Activated CD8-positive, alpha-beta T cell treated with anti-CD3 and anti-CD28 coated beads for 36 hours (primary cell): ENCODE measurements at regions of chr12 and their contacts with region 1.

Region 1: GRCh38 chr12:452667-453210 is 7.0 kb upstream of the B4GALNT3 start:
- DNase-seq: peak; percentile 91
- ATAC-seq: peak; percentile 40
- H3K4me3 Mint-ChIP-seq: no peak overlapping the region
- H3K27ac Mint-ChIP-seq: no peak overlapping the region
- H3K4me1 Mint-ChIP-seq: peaks cover 3% of the 10 kb centered on the region
- H3K27me3 Mint-ChIP-seq: peaks cover 9% of the 10 kb centered on the region
- CTCF ChIP-seq: no peak

Region 2: DNA sequence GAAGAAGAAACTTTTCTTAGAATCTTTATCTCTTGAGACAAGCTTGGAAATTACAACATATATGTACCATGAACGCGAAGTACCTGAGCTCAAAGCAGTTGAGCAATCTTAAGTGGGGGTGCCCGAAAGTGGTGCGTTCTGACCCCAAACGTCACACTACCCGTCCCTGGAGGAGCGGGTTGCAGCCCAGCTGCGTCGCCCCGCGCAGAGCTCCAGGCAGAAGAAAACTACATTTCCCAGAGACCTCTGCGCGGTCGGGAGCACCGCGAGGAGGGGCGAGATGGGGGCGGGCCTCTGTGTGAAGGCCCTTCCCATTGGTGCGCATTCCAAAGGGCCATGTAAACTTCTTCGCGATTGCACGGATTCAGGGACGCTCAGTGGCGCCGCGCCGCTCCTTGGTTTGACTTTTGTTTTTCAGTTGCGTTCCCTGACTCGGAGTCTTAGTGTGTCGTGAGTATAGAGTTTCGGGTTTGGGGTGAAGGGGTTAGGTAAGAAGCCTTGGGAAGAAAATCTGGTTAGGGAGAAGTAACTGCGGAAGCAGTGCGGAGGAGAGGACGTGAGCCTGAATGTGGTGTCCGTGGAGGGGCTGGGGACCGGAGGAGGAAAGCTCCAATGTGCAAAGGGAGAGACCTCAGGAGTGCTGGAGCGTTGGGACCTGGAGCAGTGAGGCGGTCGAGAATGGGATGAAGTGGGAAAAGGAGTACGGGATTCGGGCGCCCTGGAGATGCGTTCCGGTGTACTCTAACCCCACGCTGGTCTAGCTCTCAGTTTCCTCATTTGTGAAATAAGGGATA is 51.3 kb before region 1 on chr12 and contains the start of gene CCDC77:
- CTCF ChIA-PET with region 1: interaction called, 15 read pairs
- POLR2A ChIA-PET with region 1: no interaction called
- intact Hi-C with region 1: no loop called
- DNase-seq: peak; percentile 95
- ATAC-seq: peak; percentile 100
- H3K4me3 Mint-ChIP-seq: no peak within 1 kb of the TSS
- H3K27ac Mint-ChIP-seq: no peak within 1 kb of the TSS
- H3K4me1 Mint-ChIP-seq: peaks cover 3% of the 10 kb centered on the region
- H3K27me3 Mint-ChIP-seq: no peaks in the 10 kb centered on the region
- CTCF ChIP-seq: no peak
- total RNA-seq, gene CCDC77: 14.0 to 19.0 TPM

Region 3: DNA sequence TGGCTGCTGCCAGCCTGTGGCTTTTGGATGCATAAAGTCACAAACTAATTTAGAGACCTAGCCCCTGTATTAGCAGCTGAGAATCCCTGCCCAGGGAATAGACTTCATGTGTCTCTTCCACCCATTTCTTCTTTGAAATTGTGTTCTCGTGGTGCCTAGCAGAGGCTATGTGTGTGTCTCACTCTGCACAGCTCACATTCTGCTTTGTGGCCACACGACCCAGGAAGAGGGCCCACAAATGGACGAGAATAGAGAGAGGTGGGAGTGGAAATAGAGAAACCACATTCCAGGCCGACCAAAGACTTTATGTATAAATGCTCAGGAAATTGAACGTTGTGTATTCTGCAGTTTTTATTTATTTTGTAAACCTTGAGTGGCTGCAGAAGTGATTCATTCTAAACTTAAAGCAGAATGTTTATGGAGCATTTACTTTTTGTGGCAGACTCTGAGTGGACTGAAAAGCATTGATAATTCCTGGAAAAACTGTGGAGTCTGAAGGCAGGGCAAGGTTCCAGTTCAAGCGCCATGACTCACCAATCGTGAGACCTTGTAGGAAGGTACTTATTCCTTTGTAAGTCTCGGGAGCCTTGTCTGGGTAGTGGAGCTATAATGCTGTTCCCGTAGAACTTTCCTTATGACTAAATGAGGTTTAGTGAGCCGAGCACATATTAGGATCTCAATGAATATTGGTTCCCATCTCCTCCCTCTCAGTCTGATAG is 16.1 kb after region 1 on chr12:
- CTCF ChIA-PET with region 1: interaction called, 31 read pairs
- POLR2A ChIA-PET with region 1: interaction called, 3 read pairs
- intact Hi-C with region 1: no loop called
- DNase-seq: no peak
- ATAC-seq: no peak
- H3K4me3 Mint-ChIP-seq: no peak overlapping the region
- H3K27ac Mint-ChIP-seq: no peak overlapping the region
- H3K4me1 Mint-ChIP-seq: peaks cover 2% of the 10 kb centered on the region
- H3K27me3 Mint-ChIP-seq: peaks cover 7% of the 10 kb centered on the region
- CTCF ChIP-seq: no peak

Region 4: DNA sequence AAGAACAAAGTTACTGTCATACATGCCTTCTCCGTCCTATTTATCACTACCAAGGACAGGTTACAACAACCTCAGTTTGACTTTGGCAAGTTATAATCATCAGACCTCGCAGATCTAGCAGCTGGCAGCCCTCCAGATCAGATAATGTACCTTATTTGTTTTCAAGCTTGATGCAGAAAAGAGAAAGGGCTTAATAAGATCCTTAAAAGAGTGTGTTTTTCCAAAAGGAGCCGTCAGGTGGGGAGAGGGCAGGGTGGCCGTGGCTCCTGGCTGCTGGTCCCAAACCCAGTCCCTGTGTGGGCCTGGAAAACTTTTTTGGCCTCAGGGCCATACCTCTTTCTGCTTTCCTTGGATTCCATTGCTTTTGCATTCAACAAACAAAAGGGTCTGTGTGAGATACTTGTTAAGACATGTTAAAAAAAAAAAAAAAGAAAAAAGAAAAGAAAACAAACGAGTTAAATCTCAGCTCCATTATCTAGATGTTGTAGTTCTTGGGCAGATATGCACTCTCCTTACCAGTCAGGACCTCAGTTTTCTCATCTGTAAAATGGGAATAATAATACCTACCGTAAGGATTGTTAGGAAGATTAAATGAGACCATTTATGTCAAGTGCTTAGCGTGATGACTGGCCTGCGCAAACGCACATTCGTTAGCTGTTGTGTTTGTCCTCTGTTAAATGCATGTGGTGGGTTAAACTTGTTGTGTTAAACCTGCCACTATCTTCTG is 71.6 kb after region 1 on chr12:
- CTCF ChIA-PET with region 1: no interaction called
- POLR2A ChIA-PET with region 1: no interaction called
- intact Hi-C with region 1: no loop called
- DNase-seq: no peak
- ATAC-seq: no peak
- H3K4me3 Mint-ChIP-seq: no peak overlapping the region
- H3K27ac Mint-ChIP-seq: no peak overlapping the region
- H3K4me1 Mint-ChIP-seq: no peaks in the 10 kb centered on the region
- H3K27me3 Mint-ChIP-seq: peaks cover 2% of the 10 kb centered on the region
- CTCF ChIP-seq: no peak

Region 5: DNA sequence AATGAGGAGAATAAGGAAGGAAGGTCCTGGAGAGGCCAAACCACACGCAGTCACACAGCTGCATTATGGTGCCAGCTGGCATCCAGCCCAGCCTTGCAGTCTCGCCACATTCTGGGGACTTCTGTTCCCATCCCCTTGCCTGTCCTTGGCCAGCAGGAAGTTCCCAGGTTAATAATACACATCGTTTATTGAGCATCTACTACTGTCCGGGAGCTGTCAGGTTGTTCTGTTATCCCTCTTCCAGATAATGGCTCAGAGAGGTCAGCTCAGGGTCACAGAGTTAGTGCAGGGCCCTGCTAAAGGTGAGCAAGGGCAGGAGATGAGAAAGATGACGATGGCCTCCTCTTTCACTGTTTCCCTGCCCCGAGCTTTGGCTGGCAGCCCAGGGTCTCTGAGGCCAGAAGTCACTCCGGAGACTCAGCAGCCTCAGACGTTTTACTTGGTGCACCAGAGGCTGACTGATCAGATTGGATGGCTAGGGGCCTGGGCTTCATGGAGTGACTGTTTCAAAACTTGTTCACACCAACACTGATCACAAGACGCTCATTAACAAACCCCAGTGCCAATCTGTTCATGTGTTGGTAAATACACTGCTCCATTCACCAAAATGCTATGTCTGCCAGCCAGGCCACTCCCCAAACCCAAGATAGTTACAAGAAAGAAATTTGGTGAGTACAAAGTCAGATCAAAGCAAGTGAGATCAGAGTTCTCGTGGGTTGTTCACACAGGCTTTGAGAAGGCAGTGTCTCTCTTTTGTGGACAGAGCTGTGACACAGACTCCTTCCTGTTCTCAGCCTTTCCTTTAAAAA is 86.2 kb after region 1 on chr12:
- CTCF ChIA-PET with region 1: interaction called, 154 read pairs
- POLR2A ChIA-PET with region 1: interaction called, 3 read pairs
- intact Hi-C with region 1: no loop called
- DNase-seq: peak; percentile 34
- ATAC-seq: peak; percentile 91
- H3K4me3 Mint-ChIP-seq: no peak overlapping the region
- H3K27ac Mint-ChIP-seq: peak overlapping the region; percentile 49
- H3K4me1 Mint-ChIP-seq: peaks cover 19% of the 10 kb centered on the region
- H3K27me3 Mint-ChIP-seq: no peaks in the 10 kb centered on the region
- CTCF ChIP-seq: no peak

Region 6: GRCh38 chr12:553205-554000 is 100.7 kb after region 1 on chr12:
- CTCF ChIA-PET with region 1: interaction called, 114 read pairs
- POLR2A ChIA-PET with region 1: interaction called, 4 read pairs
- intact Hi-C with region 1: loop called (anchors 5 kb)
- DNase-seq: peak; percentile 70
- ATAC-seq: peak; percentile 84
- H3K4me3 Mint-ChIP-seq: peak overlapping the region; percentile 85
- H3K27ac Mint-ChIP-seq: peak overlapping the region; percentile 87
- H3K4me1 Mint-ChIP-seq: peaks cover 42% of the 10 kb centered on the region
- H3K27me3 Mint-ChIP-seq: no peaks in the 10 kb centered on the region
- CTCF ChIP-seq: no peak

Region 7: DNA sequence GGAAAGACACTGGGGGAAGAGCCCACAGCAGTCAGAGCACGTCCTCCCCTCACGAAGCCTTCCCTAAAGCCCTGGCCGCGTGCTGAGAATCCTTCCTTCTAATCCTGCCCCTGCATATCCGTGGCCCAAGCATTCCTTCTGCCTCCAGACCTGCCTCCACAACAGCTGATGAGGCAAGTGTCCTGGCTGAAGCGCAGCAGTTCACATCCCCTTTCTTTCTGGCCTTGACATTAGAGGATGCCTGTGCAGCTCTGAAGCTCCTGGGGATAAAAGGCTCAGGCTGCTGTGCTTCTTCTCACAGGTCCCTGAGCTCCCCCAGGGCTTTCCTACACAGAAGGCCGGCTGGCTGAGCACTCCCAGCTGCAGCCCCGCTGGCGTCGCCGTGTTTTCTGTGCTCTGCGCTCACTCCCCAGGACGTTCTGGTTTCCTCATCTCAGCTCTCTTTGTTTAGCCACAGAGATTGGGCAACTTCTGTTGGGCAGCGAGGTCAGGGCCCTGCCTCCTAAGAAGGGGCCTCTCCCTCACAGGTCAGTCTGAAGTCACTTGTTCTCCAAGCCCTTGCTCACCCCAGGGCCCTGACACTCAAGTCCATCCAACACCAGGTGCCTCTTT is 164.7 kb after region 1 on chr12:
- CTCF ChIA-PET with region 1: no interaction called
- POLR2A ChIA-PET with region 1: no interaction called
- intact Hi-C with region 1: no loop called
- DNase-seq: no peak
- ATAC-seq: no peak
- H3K4me3 Mint-ChIP-seq: no peak overlapping the region
- H3K27ac Mint-ChIP-seq: no peak overlapping the region
- H3K4me1 Mint-ChIP-seq: peaks cover 30% of the 10 kb centered on the region
- H3K27me3 Mint-ChIP-seq: no peaks in the 10 kb centered on the region
- CTCF ChIP-seq: no peak